ENCODE measurements at regions of chr16 and their contacts with region 1.

Region 1: GRCh38 chr16:74975591-74975990 is 9.3 kb downstream of the WDR59 start:
- DNase-seq: no peak

Region 2: DNA sequence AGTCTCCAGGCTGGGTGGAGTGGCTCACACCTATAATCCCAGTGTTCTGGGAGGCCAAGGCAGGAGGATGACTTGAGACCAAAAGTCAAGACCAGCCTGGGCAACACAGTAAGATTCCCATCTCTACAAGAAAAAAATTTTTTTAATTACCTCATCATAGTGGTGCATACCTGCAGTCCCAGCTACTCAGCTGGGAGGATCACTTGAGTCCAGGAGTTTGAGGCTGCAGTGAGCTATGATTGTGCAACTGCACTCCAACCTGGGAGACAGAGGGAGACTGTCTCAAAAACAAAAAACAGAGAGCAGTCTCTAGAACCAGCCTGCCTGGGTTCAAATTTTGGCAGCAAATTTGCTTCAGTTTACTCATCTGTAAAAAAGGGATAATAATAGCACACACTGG is 35.9 kb before region 1 on chr16:
- intact Hi-C with region 1: loop called in 1 of 2 experiments (anchors 2 kb)
- DNase-seq: no peak

Region 3: DNA sequence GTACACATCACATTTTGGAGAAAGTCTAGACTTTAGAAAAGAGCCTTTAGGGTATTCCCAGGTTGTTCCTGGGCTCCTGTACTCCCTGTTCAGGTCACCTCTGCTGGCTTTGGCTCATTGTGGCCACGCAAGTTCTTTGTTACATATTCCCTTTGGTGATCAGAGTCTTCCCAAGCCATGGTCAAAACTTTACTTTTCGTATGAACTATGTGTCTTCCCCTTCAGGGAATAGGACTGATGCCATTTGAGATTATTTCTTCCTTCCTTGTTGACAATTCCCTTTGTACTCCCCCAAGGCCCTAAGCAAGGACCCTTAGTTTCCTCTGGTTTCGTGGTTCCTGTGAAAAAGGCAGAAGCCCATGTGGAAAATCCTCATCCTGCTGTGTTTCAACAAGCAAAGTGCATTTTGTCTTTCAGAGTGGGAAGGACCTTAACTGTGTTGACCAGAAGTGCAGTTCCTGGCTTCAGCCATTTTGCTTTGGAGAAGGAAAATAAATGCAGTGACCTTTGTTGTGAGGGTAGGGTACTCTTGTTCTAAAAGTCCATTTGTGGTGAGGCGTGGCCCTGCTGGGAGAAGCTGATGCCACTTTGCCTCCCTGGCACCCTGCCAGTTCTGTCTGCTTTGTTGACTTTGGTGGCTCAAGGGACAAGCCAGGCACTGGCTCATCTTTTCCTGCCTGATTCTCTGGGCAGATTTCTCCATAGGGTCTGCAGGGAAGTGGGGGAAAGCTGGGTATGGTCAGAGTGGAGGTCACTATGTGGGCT is 78.4 kb after region 1 on chr16:
- intact Hi-C with region 1: no loop called
- DNase-seq: peak; percentile 82

Measured in posterior vena cava (tissue), 2 donors.